Cardiac septum (tissue), 1 donor: ENCODE measurements at regions of chr4 and their contacts with region 1.

Region 1: DNA sequence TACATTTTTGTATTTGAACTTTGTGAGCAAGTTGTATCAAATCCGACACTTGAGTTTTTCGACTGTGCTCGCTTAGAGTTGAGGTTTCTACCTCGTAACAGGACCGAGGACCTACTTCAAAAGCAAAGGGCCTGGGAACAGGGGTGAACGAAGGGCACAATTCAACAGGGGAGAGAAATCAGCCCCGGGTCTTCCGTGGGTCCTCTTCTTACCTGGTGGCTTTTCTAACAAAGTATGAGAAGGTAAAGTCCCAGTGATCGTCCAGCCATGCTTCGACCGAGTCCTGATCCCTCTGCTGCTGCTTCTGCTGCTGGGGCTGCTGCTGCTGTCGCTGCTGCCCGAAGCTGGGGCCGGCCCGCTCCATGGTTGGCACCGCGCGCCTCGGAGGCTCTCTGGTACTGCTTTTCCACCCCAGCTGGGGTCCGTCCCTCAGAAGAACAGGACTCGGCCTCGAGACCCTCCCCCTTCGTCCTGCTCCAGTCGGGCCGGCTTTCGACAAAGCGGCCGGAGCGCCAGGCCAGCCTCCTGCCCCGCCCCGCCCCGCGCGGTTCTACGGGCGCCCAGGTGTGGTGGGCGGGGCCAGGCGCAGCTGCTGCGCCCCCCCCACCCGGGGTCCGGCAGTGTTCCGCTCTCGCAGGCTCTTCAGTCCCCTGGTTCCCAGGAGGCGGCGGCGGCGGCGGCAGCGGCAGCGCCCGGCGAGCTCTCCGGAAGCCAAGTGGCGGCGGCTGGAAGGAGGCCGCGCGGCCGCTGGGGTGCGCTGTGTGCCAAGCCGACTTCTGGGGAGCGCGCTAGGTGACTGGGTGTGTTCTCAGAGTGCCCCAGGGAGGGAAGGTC is at the start of gene PDE5A:
- DNase-seq: peak; percentile 86
- total RNA-seq, gene PDE5A: 20.0 TPM

Region 2: DNA sequence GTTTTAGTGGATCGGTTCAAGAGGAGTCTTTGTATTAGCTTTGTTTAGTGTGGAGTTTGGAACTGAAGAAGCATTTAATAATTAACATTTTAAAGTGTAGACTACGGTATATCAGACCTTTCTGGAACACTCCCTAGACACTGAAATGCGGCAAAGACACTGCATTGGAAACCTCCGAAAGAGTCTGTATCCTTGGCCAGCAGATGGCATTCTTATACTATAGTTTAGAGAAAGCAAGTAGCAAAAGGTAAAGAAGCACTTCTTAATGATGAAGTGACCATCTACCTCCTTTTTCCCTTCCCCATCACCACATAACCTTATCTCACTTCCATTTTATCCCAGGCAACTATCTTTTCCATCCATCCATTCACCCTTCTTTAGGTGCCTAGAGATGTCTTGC is 314.2 kb before region 1 on chr4:
- intact Hi-C with region 1: loop called (anchors 5 kb)
- DNase-seq: no peak

Region 3: GRCh38 chr4:119329835-119330620 is 298.5 kb before region 1 on chr4:
- intact Hi-C with region 1: no loop called
- DNase-seq: no peak

Region 4: DNA sequence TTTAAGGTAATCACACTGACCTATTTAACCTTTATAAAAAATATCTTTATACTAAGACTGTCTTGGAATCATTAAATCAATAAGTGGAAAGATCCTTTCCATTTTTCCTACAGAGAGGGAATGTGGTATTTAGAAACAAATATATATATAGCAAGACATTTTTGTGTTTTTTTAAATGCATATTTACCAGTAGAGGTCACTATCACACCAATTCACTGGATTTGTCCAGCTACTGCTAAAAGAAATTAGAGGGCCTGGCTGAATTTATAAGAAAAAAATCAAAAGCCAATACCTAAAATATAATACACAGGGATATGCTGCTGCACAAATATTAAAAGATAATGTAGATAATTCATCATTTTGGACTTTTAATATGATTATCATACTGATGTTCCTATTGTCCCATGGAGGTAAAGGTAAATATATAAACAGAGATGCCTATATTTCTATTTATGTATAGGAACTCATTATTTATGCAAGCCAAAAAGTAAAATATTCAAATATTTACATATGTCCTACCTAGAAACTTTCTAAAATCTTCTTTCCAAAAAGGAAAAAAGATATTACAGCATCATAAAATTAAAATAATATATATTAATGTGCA is 69.4 kb before region 1 on chr4:
- intact Hi-C with region 1: loop called (anchors 2 kb)
- DNase-seq: no peak

Region 5: GRCh38 chr4:119692001-119692400 is 63.5 kb after region 1 on chr4:
- intact Hi-C with region 1: loop called (anchors 5 kb)
- DNase-seq: no peak

Region 6: GRCh38 chr4:119785963-119786362 is 157.4 kb after region 1 on chr4:
- intact Hi-C with region 1: loop called (anchors 5 kb)
- DNase-seq: no peak

Region 7: GRCh38 chr4:120049732-120050494 is 421.4 kb after region 1 on chr4:
- intact Hi-C with region 1: loop called (anchors 2 kb)
- DNase-seq: peak; percentile 81

Region 8: DNA sequence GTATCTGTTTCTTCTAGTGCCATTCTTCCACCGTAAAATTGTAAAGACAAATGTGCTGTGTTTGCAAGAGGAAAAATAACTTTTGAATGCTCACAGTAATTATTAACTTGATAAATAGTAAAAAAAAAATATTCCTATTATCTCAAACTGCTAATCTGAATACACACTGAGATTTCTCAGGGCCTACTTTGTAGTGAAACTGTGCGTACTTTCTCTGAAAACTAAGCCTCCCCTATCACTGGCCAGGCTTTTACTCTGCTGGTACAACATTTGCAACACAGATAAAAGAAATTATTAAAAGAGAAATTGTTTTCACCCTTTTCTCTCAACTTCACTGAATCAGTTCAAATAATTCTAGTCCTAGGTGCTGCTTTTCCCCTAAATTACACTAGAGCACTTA is 1156.7 kb after region 1 on chr4:
- intact Hi-C with region 1: no loop called
- DNase-seq: no peak